Common myeloid progenitor, CD34-positive (primary cell): ENCODE measurements at regions of chr3 and their contacts with region 1.

Region 1: GRCh38 chr3:149120051-149120972 is 9.1 kb upstream of the HPS3 start:
- DNase-seq: peak; percentile 76 to 87 (median 81)
- H3K4me3 ChIP-seq: no peak overlapping the region
- H3K27ac ChIP-seq: no peak overlapping the region
- H3K4me1 ChIP-seq: peaks cover 0 to 10% (median 3%) of the 10 kb centered on the region in 4 experiments
- H3K27me3 ChIP-seq: no peaks in the 10 kb centered on the region

Region 2: DNA sequence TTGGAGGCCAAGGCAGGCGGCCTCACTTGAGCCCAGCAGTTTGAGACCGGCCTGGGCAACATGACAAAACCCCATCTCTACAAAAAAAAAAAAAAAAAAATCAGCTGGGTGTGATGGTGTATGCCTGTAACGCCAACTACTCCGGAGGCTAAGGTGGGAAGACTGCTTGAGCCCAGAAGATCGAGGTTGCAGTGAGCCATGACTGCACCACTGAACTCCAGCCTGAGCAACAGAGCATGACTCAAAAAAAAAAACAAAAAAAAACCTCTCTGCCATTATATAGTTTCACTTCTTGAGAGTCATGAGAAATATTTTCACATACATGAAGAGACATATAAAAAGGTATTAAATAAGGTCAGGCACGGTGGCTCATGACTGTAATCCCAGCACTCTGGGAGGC is 147.3 kb after region 1 on chr3:
- CTCF ChIA-PET with region 1: interaction called, 106 read pairs
- POLR2A ChIA-PET with region 1: no interaction called
- DNase-seq: no peak
- H3K4me3 ChIP-seq: no peak overlapping the region
- H3K27ac ChIP-seq: no peak overlapping the region
- H3K4me1 ChIP-seq: peaks cover 0 to 3% (median 0%) of the 10 kb centered on the region in 4 experiments
- H3K27me3 ChIP-seq: no peaks in the 10 kb centered on the region

Region 3: GRCh38 chr3:149273096-149273751 is 152.9 kb after region 1 on chr3:
- CTCF ChIA-PET with region 1: interaction called, 106 read pairs
- POLR2A ChIA-PET with region 1: interaction called, 6 read pairs
- DNase-seq: peak; percentile 81 to 86 (median 82)
- H3K4me3 ChIP-seq: no peak overlapping the region
- H3K27ac ChIP-seq: no peak overlapping the region
- H3K4me1 ChIP-seq: peaks cover 7 to 30% (median 22%) of the 10 kb centered on the region in 4 experiments
- H3K27me3 ChIP-seq: no peaks in the 10 kb centered on the region